Activated naive CD4-positive, alpha-beta T cell treated with anti-CD3 and anti-CD28 coated beads for 36 hours (primary cell): ENCODE measurements at regions of chr13 and their contacts with region 1.

Region 1: GRCh38 chr13:48879432-48879831 is 96.3 kb upstream of the FNDC3A start:
- DNase-seq: no peak
- H3K4me3 Mint-ChIP-seq: no peak overlapping the region
- H3K27ac Mint-ChIP-seq: no peak overlapping the region
- H3K4me1 Mint-ChIP-seq: peaks cover 42% of the 10 kb centered on the region
- H3K27me3 Mint-ChIP-seq: no peaks in the 10 kb centered on the region

Region 2: GRCh38 chr13:48492470-48493065 is 386.9 kb before region 1 on chr13:
- CTCF ChIA-PET with region 1: no interaction called
- intact Hi-C with region 1: loop called (anchors 5 kb)
- DNase-seq: peak; percentile 74
- H3K4me3 Mint-ChIP-seq: no peak overlapping the region
- H3K27ac Mint-ChIP-seq: no peak overlapping the region
- H3K4me1 Mint-ChIP-seq: peaks cover 39% of the 10 kb centered on the region
- H3K27me3 Mint-ChIP-seq: no peaks in the 10 kb centered on the region

Region 3: DNA sequence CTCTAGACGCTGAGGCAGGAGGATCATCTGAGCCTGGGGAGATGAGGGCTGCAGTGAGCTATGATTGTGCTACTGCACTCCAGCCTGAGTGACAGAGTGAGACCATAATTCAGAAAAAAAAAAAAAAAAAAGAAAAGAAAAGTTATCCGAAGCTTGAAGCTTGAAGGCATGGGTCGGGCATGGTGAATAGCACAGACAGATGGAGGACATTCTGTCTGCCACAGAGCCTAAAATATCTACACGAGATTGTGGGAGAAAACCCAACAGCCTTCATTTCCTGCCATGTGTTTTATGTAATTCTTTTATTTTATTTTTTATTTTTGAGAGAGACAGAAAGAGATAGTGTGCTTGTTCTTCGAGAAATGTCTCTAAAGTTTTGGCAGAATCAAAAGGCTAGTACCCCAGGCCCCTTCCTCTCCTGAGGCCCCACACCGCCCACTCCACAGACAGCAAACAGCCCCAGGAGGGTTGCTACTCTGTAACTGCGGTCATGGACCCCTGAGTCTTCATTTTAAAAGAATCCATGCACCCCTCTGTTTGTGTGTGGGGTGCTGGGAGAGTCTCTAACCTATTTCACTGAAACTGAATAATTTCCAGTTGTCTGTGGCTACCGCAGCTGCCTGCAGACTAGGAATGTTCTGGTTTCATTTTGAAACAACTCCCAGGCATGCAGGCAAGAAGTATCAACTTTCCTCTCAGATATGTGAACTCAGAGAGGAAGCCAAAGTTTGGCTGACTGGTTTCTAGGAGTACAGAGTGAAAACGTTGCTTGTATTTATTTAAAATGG is 308.1 kb before region 1 on chr13:
- CTCF ChIA-PET with region 1: no interaction called
- intact Hi-C with region 1: no loop called
- DNase-seq: no peak
- H3K4me3 Mint-ChIP-seq: no peak overlapping the region
- H3K27ac Mint-ChIP-seq: no peak overlapping the region
- H3K4me1 Mint-ChIP-seq: peaks cover 7% of the 10 kb centered on the region
- H3K27me3 Mint-ChIP-seq: peaks cover 12% of the 10 kb centered on the region

Region 4: GRCh38 chr13:48731957-48732569 is 147.4 kb before region 1 on chr13:
- CTCF ChIA-PET with region 1: no interaction called
- intact Hi-C with region 1: loop called (anchors 1 kb)
- DNase-seq: peak; percentile 65
- H3K4me3 Mint-ChIP-seq: peak overlapping the region; percentile 58
- H3K27ac Mint-ChIP-seq: no peak overlapping the region
- H3K4me1 Mint-ChIP-seq: peaks cover 19% of the 10 kb centered on the region
- H3K27me3 Mint-ChIP-seq: peaks cover 3% of the 10 kb centered on the region

Region 5: GRCh38 chr13:48828962-48829421 is 50.4 kb before region 1 on chr13:
- CTCF ChIA-PET with region 1: no interaction called
- intact Hi-C with region 1: loop called (anchors 1 kb)
- DNase-seq: peak; percentile 45
- H3K4me3 Mint-ChIP-seq: no peak overlapping the region
- H3K27ac Mint-ChIP-seq: no peak overlapping the region
- H3K4me1 Mint-ChIP-seq: peaks cover 48% of the 10 kb centered on the region
- H3K27me3 Mint-ChIP-seq: no peaks in the 10 kb centered on the region